ENCODE measurements at regions of chr12 and their contacts with region 1.

Region 1: DNA sequence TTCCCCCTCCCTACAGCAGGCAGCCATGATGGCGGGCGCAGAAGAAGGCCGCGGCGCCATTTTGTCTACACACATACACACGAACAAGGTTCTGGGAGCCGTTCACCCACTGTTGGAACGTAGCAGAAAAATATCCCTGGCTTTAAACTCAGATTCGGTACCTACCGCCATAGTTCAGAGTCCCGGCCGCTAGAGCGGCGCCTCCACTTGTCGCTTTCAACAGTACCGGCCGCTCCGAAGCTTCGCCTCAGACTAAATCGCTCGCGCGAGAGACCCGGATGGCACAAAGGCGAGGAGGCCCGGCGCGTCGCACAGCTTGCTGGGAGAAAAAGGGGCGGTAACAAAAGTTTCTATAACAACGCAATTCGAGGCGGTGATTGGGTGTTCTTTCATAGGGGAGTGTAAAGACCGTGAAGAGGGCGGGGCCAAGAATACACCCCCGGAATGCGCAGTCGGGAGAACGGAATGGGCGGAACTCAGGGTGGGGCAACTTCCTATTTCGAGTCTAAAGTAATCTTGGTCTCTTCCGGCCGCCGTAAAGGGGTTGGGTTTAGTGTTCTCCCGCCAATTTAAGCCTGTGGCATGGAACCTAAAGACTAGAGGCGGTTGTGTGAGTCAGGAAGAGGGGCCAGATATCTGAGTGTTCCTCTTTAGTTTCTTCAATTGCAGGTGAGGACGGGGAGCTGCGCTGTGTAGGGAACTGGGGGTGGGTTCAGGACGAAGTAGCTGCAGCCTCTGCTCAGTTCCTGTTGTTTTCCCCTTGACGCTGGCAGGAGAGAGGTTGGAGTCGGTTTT is at the starts of genes KNTC1 and RSRC2:
- DNase-seq: peak; percentile 99
- H3K4me3 Mint-ChIP-seq: no peak within 1 kb of the TSS
- H3K27ac Mint-ChIP-seq: no peak within 1 kb of the TSS
- H3K4me1 Mint-ChIP-seq: peaks cover 44% of the 10 kb centered on the region
- H3K27me3 Mint-ChIP-seq: no peaks in the 10 kb centered on the region
- total RNA-seq, gene KNTC1: 101 to 103 TPM
- total RNA-seq, gene RSRC2: 90.7 to 97.4 TPM

Region 2: DNA sequence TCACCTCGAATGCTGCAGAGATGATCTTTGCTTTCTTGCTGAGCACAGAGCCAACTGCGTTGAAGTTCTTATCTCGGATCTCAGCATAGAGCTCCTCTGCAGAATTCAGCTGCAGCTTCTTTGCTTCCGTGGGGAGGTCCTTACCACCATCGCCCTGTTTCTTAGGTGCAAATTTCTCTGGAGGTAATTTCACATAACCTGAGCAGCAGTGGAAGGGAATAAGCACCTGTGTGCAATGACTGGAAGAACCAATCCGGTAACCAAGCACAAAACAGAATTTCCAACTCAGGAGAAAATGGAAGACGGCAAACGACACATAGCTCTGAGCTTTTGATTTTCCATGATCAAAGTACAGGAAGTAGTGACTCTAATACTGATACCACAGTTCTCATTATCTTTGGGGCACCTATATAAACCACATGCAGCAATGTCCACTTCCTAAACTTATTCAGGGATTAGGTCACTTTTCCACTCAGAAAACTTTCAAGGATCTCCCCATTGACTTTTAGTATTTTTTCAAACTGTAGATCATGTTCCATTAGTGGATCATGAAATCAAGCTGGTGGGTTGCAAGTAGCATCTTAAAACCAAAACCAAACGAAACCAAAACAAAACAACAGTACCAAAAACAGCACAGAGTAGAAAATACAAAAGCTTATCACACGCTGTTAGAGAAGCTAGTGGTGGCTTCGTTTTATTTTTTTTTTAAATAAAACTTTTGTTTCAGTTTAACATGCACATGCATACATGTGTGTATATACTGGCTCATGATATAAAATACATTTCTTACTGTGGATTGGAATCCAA is 282.1 kb before region 1 on chr12:
- CTCF ChIA-PET with region 1: no interaction called
- POLR2A ChIA-PET with region 1: interaction called, 11 read pairs
- DNase-seq: peak; percentile 49
- H3K4me3 Mint-ChIP-seq: peak overlapping the region; percentile 70
- H3K27ac Mint-ChIP-seq: peak overlapping the region; percentile 96
- H3K4me1 Mint-ChIP-seq: peaks cover 31% of the 10 kb centered on the region
- H3K27me3 Mint-ChIP-seq: no peaks in the 10 kb centered on the region

Region 3: DNA sequence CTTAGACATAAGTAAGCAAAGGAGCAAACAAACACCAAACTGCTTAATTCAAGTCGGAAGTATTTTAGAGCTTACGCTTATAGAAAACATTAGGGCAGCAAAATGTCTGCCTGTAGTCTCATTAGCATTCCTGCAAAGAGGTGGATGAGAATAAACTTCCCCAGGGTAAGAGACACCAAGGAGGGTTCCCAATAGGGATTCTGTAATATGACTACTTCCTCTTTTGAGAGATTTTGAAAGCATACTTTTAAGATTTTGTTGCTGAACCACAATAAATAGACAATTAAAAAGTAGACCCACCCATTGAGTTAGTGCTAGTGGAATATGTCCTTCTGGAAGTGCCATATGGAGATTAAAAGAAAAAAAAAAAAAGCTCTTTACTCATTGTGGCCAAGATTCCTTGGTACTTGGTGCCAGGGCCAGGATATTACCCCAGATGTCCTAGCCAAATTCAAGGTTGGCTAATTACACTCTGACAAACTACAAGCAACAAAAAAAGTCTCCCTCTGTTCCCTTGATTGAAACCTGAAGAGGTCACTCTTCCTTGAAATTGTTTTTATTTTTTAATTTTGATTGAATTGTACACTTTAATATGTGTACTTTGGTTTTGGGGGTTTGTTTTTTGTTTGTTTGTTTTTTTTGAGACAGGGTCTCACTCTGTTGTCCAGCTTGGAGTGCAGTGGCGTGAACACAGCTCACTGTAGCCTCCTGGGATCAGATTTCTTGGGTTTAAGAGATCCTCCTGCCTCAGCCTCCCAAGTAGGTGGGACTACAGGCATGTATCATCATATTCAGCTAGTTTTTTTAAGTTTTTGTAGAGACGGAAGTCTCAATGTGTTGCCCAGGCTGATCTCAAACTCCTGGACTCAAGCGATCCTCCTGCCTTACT is 113.1 kb before region 1 on chr12:
- CTCF ChIA-PET with region 1: no interaction called
- POLR2A ChIA-PET with region 1: interaction called, 11 read pairs
- DNase-seq: no peak
- H3K4me3 Mint-ChIP-seq: no peak overlapping the region
- H3K27ac Mint-ChIP-seq: peak overlapping the region; percentile 91
- H3K4me1 Mint-ChIP-seq: peaks cover 40% of the 10 kb centered on the region
- H3K27me3 Mint-ChIP-seq: no peaks in the 10 kb centered on the region

Region 4: GRCh38 chr12:122508163-122508562 is 18.7 kb before region 1 on chr12:
- CTCF ChIA-PET with region 1: interaction called, 3 read pairs
- POLR2A ChIA-PET with region 1: interaction called, 542 read pairs
- DNase-seq: no peak
- H3K4me3 Mint-ChIP-seq: no peak overlapping the region
- H3K27ac Mint-ChIP-seq: no peak overlapping the region
- H3K4me1 Mint-ChIP-seq: peaks cover 12% of the 10 kb centered on the region
- H3K27me3 Mint-ChIP-seq: no peaks in the 10 kb centered on the region

Region 5: DNA sequence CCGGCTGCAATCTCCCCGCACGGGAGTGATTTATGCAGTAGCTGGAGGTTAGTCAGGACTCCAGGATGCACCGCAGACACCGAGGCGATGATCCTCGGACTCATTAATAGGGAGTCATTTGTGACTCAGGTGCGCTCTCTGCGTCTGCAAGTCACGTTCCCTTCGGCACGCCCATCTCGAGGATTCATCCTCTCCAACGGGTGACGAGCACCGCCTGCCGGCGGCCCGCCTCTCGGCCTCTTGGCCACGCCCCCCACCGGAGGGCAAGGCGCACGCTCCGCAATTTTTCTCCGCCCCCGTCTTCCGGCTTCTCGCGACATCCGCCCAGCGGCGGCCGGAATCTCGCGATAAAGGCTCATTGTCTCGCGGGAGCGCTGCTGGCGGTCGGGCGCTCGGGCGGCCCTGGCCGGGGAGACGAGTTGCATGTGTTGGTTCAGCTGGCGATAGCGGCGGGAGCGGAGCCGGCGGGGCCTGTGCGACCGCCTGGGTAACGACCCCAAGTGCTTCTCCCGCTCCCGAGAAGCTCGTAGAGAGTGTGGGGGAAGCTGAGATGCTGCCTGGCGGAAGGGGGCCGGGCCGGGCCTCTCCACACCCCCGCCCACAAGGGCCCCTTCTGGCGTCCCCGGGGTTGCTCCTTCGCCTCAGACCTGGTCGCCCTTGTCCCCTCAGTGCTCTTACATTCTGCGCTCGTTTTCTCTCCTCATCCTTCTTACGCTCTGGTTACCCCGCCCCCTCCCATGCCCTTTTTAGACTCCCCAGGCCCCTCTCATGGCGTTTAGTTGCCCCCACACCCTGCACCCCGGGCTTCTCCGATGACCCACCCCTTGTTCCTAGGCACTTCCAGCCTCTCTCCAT is 225.8 kb after region 1 on chr12 and contains the start of gene DENR:
- CTCF ChIA-PET with region 1: no interaction called
- POLR2A ChIA-PET with region 1: interaction called, 28 read pairs
- DNase-seq: peak; percentile 100
- H3K4me3 Mint-ChIP-seq: peak within 1 kb of the TSS; percentile 86
- H3K27ac Mint-ChIP-seq: peak within 1 kb of the TSS; percentile 83
- H3K4me1 Mint-ChIP-seq: peaks cover 48% of the 10 kb centered on the region
- H3K27me3 Mint-ChIP-seq: no peaks in the 10 kb centered on the region
- total RNA-seq, gene DENR: 52.5 to 55.9 TPM

Region 6: GRCh38 chr12:123106628-123107359 is 579.9 kb after region 1 on chr12:
- CTCF ChIA-PET with region 1: no interaction called
- POLR2A ChIA-PET with region 1: no interaction called
- DNase-seq: peak; percentile 85
- H3K4me3 Mint-ChIP-seq: peak overlapping the region; percentile 37
- H3K27ac Mint-ChIP-seq: peak overlapping the region; percentile 93
- H3K4me1 Mint-ChIP-seq: peaks cover 39% of the 10 kb centered on the region
- H3K27me3 Mint-ChIP-seq: no peaks in the 10 kb centered on the region

Measured in activated CD4-positive, alpha-beta memory T cell treated with anti-CD3 and anti-CD28 coated beads, Interleukin-2, amount 10 ng/mL, durations not matched to agents 7 days and 5 days (primary cell).